ENCODE measurements at regions of chr14 and their contacts with region 1.

Region 1: GRCh38 chr14:94080471-94081289 is at the start of gene DDX24:
- DNase-seq: peak; percentile 96 to 97 (median 97)
- H3K4me3 ChIP-seq: peak within 1 kb of the TSS; percentile 92 to 98
- H3K4me3 Mint-ChIP-seq: peak within 1 kb of the TSS; percentile 99 to 100 (median 99)
- H3K27ac ChIP-seq: peak within 1 kb of the TSS; percentile 86
- H3K27ac Mint-ChIP-seq: peak within 1 kb of the TSS; percentile 98 to 100 (median 99)
- H3K4me1 ChIP-seq: peaks cover 51% of the 10 kb centered on the region
- H3K4me1 Mint-ChIP-seq: peaks cover 36 to 72% (median 46%) of the 10 kb centered on the region in 4 donors
- H3K27me3 ChIP-seq: no peaks in the 10 kb centered on the region
- H3K27me3 Mint-ChIP-seq: no peaks in the 10 kb centered on the region
- total RNA-seq, gene DDX24: 313 to 322 TPM

Region 2: GRCh38 chr14:93970549-93970946 is 110.1 kb before region 1 on chr14:
- CTCF ChIA-PET with region 1: no interaction called
- POLR2A ChIA-PET with region 1: interaction called, 6 read pairs
- intact Hi-C with region 1: loop called (anchors 2 kb)
- DNase-seq: peak; percentile 69 to 78 (median 70)
- H3K4me3 ChIP-seq: peak overlapping the region; percentile 66 to 79
- H3K4me3 Mint-ChIP-seq: peak overlapping the region; percentile 86 to 94 (median 90)
- H3K27ac ChIP-seq: peak overlapping the region; percentile 41
- H3K27ac Mint-ChIP-seq: peak overlapping the region in 6 of 7 donors; percentile 74 to 93 (median 84)
- H3K4me1 ChIP-seq: peaks cover 56% of the 10 kb centered on the region
- H3K4me1 Mint-ChIP-seq: peaks cover 25 to 67% (median 45%) of the 10 kb centered on the region in 4 donors
- H3K27me3 ChIP-seq: no peaks in the 10 kb centered on the region
- H3K27me3 Mint-ChIP-seq: no peaks in the 10 kb centered on the region

Region 3: GRCh38 chr14:94026173-94026888 is 54.3 kb before region 1 on chr14 and contains the start of gene OTUB2:
- CTCF ChIA-PET with region 1: interaction called, 4 read pairs
- POLR2A ChIA-PET with region 1: interaction called, 17 read pairs
- intact Hi-C with region 1: loop called (anchors 2 kb)
- DNase-seq: peak; percentile 96 to 97 (median 97)
- H3K4me3 ChIP-seq: peak within 1 kb of the TSS in 1 of 2 donors; percentile 56
- H3K4me3 Mint-ChIP-seq: peak within 1 kb of the TSS; percentile 81 to 88 (median 84)
- H3K27ac ChIP-seq: peak within 1 kb of the TSS; percentile 13
- H3K27ac Mint-ChIP-seq: peak within 1 kb of the TSS in 6 of 7 donors; percentile 42 to 89 (median 74)
- H3K4me1 ChIP-seq: peaks cover 45% of the 10 kb centered on the region
- H3K4me1 Mint-ChIP-seq: peaks cover 30 to 55% (median 42%) of the 10 kb centered on the region in 4 donors
- H3K27me3 ChIP-seq: no peaks in the 10 kb centered on the region
- H3K27me3 Mint-ChIP-seq: no peaks in the 10 kb centered on the region
- total RNA-seq, gene OTUB2: 0.42 to 0.67 TPM

Region 4: GRCh38 chr14:94129111-94129757 is 48.6 kb after region 1 on chr14 and contains the start of gene IFI27L2:
- CTCF ChIA-PET with region 1: interaction called, 23 read pairs
- POLR2A ChIA-PET with region 1: interaction called, 17 read pairs
- intact Hi-C with region 1: loop called (anchors 1 kb)
- DNase-seq: peak; percentile 34 to 80 (median 46)
- H3K4me3 ChIP-seq: peak within 1 kb of the TSS; percentile 50 to 82
- H3K4me3 Mint-ChIP-seq: peak within 1 kb of the TSS; percentile 86 to 93 (median 90)
- H3K27ac ChIP-seq: peak within 1 kb of the TSS; percentile 46
- H3K27ac Mint-ChIP-seq: peak within 1 kb of the TSS; percentile 77 to 88 (median 84)
- H3K4me1 ChIP-seq: peaks cover 18% of the 10 kb centered on the region
- H3K4me1 Mint-ChIP-seq: peaks cover 12 to 25% (median 20%) of the 10 kb centered on the region in 4 donors
- H3K27me3 ChIP-seq: no peaks in the 10 kb centered on the region
- H3K27me3 Mint-ChIP-seq: no peaks in the 10 kb centered on the region
- total RNA-seq, gene IFI27L2: 34.0 to 38.2 TPM

Region 5: GRCh38 chr14:94173885-94174603 is 93.4 kb after region 1 on chr14 and contains the start of gene PPP4R4:
- CTCF ChIA-PET with region 1: no interaction called
- POLR2A ChIA-PET with region 1: interaction called, 8 read pairs
- intact Hi-C with region 1: loop called (anchors 2 kb)
- DNase-seq: peak; percentile 85 to 93 (median 87)
- H3K4me3 ChIP-seq: peak within 1 kb of the TSS in 1 of 2 donors; percentile 60
- H3K4me3 Mint-ChIP-seq: peak within 1 kb of the TSS; percentile 83 to 91 (median 88)
- H3K27ac ChIP-seq: peak within 1 kb of the TSS; percentile 37
- H3K27ac Mint-ChIP-seq: peak within 1 kb of the TSS; percentile 63 to 91 (median 86)
- H3K4me1 ChIP-seq: peaks cover 6% of the 10 kb centered on the region
- H3K4me1 Mint-ChIP-seq: peaks cover 16 to 28% (median 21%) of the 10 kb centered on the region in 4 donors
- H3K27me3 ChIP-seq: peaks cover 3% of the 10 kb centered on the region
- H3K27me3 Mint-ChIP-seq: peaks cover 0 to 7% of the 10 kb centered on the region in 2 donors
- total RNA-seq, gene PPP4R4: 6.3 to 7.3 TPM